Activated B cell treated with CpG ODN at 0.5 μM for 24 hours (primary cell): ENCODE measurements at regions of chr4 and their contacts with region 1.

Region 1: GRCh38 chr4:153083447-153083947 is 120.7 kb upstream of the TRIM2 start:
- DNase-seq: no peak
- ATAC-seq: peak; percentile 78
- H3K4me3 Mint-ChIP-seq: peak overlapping the region; percentile 67
- H3K27ac Mint-ChIP-seq: peak overlapping the region; percentile 64
- H3K4me1 Mint-ChIP-seq: peaks cover 25% of the 10 kb centered on the region
- H3K27me3 Mint-ChIP-seq: peaks cover 1% of the 10 kb centered on the region
- CTCF ChIP-seq: no peak

Region 2: GRCh38 chr4:152454398-152455011 is 629.0 kb before region 1 on chr4:
- CTCF ChIA-PET with region 1: interaction called, 3 read pairs
- POLR2A ChIA-PET with region 1: no interaction called
- intact Hi-C with region 1: loop called (anchors 5 kb)
- DNase-seq: no peak
- ATAC-seq: no peak
- H3K4me3 Mint-ChIP-seq: no peak overlapping the region
- H3K27ac Mint-ChIP-seq: peak overlapping the region; percentile 41
- H3K4me1 Mint-ChIP-seq: peaks cover 50% of the 10 kb centered on the region
- H3K27me3 Mint-ChIP-seq: no peaks in the 10 kb centered on the region
- CTCF ChIP-seq: no peak

Region 3: GRCh38 chr4:152850377-152850776 is 233.1 kb before region 1 on chr4:
- CTCF ChIA-PET with region 1: interaction called, 84 read pairs
- POLR2A ChIA-PET with region 1: interaction called, 3 read pairs
- intact Hi-C with region 1: loop called (anchors 1 kb)
- DNase-seq: no peak
- ATAC-seq: peak; percentile 75
- H3K4me3 Mint-ChIP-seq: peak overlapping the region; percentile 52
- H3K27ac Mint-ChIP-seq: peak overlapping the region; percentile 78
- H3K4me1 Mint-ChIP-seq: peaks cover 25% of the 10 kb centered on the region
- H3K27me3 Mint-ChIP-seq: no peaks in the 10 kb centered on the region
- CTCF ChIP-seq: no peak

Region 4: DNA sequence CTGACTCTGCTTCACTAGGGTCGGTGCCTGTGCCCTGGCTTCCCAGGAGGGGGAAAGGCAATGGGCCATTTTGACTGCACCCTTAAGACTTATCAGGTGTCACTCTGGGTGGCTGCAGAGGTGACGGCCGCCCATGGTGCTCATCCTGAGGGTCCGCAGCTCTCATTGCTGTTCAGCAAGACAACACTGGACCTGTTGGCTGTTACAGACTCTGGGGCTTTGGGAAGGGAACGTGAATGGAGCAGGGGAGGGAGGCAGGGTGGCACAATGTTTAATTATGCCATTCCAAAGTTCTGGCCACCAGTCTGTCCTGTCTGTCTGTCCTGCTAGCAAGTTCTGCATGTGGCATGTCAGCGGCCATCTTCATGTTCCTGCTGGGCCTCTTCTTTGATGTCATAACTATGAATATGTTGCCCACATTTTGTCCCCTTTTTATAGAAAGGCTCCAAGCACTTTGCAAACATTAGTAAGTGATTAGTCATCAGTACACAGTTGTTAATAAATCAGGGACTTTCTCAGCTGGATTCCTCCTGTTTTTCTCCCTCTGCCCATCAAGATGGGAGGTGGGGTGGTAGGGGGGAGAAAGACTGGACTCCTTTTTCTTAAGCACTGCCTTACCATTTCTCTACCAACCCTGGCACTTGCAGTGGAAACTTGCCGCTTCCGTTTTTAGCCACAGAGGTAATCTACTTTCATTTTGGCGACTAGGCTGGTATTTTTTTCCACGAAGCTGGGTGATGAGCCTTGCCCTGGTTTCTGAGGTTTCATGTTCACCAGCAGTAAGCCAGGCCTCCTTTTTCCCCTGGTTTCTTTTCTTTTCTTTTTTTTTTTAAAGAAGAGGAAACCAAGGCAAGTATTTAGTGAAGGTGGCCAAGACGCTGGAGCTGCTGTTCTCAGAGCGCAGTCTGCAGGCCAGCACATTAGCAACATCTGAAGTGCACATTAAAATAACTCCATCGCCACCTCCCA is 32.1 kb after region 1 on chr4:
- CTCF ChIA-PET with region 1: interaction called, 30 read pairs
- POLR2A ChIA-PET with region 1: interaction called, 5 read pairs
- intact Hi-C with region 1: loop called (anchors 1 kb)
- DNase-seq: peak; percentile 31
- ATAC-seq: peak; percentile 84
- H3K4me3 Mint-ChIP-seq: peak overlapping the region; percentile 65
- H3K27ac Mint-ChIP-seq: no peak overlapping the region
- H3K4me1 Mint-ChIP-seq: peaks cover 3% of the 10 kb centered on the region
- H3K27me3 Mint-ChIP-seq: no peaks in the 10 kb centered on the region
- CTCF ChIP-seq: no peak

Region 5: GRCh38 chr4:153137159-153137558 is 53.7 kb after region 1 on chr4:
- CTCF ChIA-PET with region 1: interaction called, 10 read pairs
- POLR2A ChIA-PET with region 1: no interaction called
- intact Hi-C with region 1: no loop called
- DNase-seq: no peak
- ATAC-seq: no peak
- H3K4me3 Mint-ChIP-seq: no peak overlapping the region
- H3K27ac Mint-ChIP-seq: no peak overlapping the region
- H3K4me1 Mint-ChIP-seq: peaks cover 31% of the 10 kb centered on the region
- H3K27me3 Mint-ChIP-seq: peaks cover 28% of the 10 kb centered on the region
- CTCF ChIP-seq: no peak

Region 6: GRCh38 chr4:153643406-153644383 is 560.2 kb after region 1 on chr4:
- CTCF ChIA-PET with region 1: interaction called, 10 read pairs
- POLR2A ChIA-PET with region 1: interaction called, 4 read pairs
- intact Hi-C with region 1: loop called (anchors 1 kb)
- DNase-seq: no peak
- ATAC-seq: peak; percentile 95
- H3K4me3 Mint-ChIP-seq: no peak overlapping the region
- H3K27ac Mint-ChIP-seq: no peak overlapping the region
- H3K4me1 Mint-ChIP-seq: peaks cover 10% of the 10 kb centered on the region
- H3K27me3 Mint-ChIP-seq: no peaks in the 10 kb centered on the region
- CTCF ChIP-seq: peak; percentile 36